T-cell (primary cell): ENCODE measurements at regions of chr17 and their contacts with region 1.

Region 1: DNA sequence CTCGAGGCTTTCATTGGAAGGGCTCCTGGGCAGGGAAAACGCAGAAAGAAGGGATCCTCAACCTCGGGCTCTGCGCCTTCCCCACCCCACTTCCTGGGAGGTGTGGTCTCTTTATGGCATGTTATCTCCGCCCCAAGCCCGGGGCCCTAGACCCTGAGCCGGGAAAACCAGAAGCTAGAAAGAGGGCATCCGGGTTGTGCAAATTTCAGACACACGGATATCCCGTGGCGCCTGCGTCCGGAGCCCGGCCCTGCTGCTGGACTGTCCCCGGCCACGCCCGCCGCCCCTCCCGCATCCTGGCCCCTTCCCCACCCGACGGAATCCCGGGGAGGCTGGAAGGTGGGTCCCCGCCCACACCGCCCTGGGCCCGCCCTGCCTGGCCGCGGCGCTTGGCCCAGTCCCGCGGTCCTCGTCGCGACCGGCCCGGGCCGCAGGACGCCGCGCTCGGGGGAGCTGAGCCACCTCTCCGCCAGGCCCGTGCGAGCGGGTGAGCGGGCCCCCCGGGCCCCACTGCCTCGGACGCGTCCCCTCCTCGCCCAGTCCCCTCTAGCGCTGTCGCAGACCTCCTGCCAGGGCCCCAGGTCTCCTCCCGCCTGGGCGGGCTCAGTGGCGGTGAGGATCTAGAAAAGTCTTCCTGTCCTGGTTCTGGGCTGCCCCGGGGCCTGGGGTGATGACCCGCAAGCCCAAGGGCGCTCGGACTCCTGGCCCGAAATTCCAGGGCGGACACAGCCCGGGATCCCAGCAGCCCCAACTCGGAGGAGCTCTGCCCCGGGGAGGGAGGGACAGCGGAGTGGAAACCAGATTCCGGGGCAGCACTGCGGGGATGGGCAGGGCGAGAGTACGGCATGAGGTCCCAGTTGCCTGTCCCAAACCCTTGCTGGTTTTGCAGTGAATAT is at the start of gene SLC16A5:
- DNase-seq: peak in 27 of 35 experiments; percentile 18 to 68 (median 35)
- ATAC-seq: peak; percentile 74 to 83 (median 80)
- H3K4me3 ChIP-seq: peak within 1 kb of the TSS; percentile 61 to 70
- H3K4me3 Mint-ChIP-seq: peak within 1 kb of the TSS; percentile 80 to 83 (median 81)
- H3K27ac ChIP-seq: peak within 1 kb of the TSS; percentile 52
- H3K27ac Mint-ChIP-seq: peak within 1 kb of the TSS; percentile 82 to 91
- H3K4me1 ChIP-seq: peaks cover 15 to 51% of the 10 kb centered on the region in 2 experiments
- H3K4me1 Mint-ChIP-seq: peaks cover 56 to 77% (median 59%) of the 10 kb centered on the region in 3 donors
- H3K27me3 ChIP-seq: no peaks in the 10 kb centered on the region
- H3K27me3 Mint-ChIP-seq: no peaks in the 10 kb centered on the region
- total RNA-seq, gene SLC16A5: 9.1 to 24.3 (median 16.8) TPM

Region 2: DNA sequence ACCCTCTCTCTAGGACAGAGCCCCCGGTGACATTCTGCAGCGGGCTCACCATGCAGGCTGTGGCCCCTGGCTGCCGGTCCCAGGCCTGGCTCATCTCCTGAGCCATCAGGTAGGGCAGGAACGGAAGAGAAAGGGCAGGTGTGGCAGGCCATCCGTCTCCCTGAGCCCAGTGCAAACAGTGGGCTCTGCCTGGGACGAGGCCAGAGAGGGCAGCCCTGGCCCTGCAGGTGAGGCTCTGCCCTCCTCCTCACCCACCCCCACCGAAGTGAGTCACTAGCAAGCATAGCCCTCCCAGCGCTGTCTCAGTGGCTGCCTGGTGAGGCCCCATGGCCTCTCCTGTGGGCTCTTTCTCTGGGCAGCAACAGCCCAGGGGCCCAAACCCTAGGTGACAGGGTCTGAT is 137.6 kb before region 1 on chr17:
- CTCF ChIA-PET with region 1: no interaction called
- POLR2A ChIA-PET with region 1: no interaction called
- DNase-seq: no peak
- ATAC-seq: no peak
- H3K4me3 ChIP-seq: no peak overlapping the region
- H3K4me3 Mint-ChIP-seq: no peak overlapping the region
- H3K27ac ChIP-seq: no peak overlapping the region
- H3K27ac Mint-ChIP-seq: no peak overlapping the region
- H3K4me1 ChIP-seq: no peaks in the 10 kb centered on the region
- H3K4me1 Mint-ChIP-seq: no peaks in the 10 kb centered on the region
- H3K27me3 ChIP-seq: peaks cover under 1 to 52% of the 10 kb centered on the region in 2 experiments
- H3K27me3 Mint-ChIP-seq: peaks cover 2 to 3% of the 10 kb centered on the region in 2 donors

Region 3: GRCh38 chr17:75059369-75060345 is 28.1 kb before region 1 on chr17:
- CTCF ChIA-PET with region 1: interaction called, 3 read pairs
- POLR2A ChIA-PET with region 1: interaction called, 7 to 10 read pairs
- DNase-seq: peak in 2 of 35 experiments; percentile 17 to 51
- ATAC-seq: peak; percentile 70 to 92 (median 74)
- H3K4me3 ChIP-seq: no peak overlapping the region
- H3K4me3 Mint-ChIP-seq: no peak overlapping the region
- H3K27ac ChIP-seq: no peak overlapping the region
- H3K27ac Mint-ChIP-seq: peak overlapping the region; percentile 46 to 61
- H3K4me1 ChIP-seq: no peaks in the 10 kb centered on the region
- H3K4me1 Mint-ChIP-seq: peaks cover 10 to 18% (median 12%) of the 10 kb centered on the region in 3 donors
- H3K27me3 ChIP-seq: no peaks in the 10 kb centered on the region
- H3K27me3 Mint-ChIP-seq: no peaks in the 10 kb centered on the region

Region 4: DNA sequence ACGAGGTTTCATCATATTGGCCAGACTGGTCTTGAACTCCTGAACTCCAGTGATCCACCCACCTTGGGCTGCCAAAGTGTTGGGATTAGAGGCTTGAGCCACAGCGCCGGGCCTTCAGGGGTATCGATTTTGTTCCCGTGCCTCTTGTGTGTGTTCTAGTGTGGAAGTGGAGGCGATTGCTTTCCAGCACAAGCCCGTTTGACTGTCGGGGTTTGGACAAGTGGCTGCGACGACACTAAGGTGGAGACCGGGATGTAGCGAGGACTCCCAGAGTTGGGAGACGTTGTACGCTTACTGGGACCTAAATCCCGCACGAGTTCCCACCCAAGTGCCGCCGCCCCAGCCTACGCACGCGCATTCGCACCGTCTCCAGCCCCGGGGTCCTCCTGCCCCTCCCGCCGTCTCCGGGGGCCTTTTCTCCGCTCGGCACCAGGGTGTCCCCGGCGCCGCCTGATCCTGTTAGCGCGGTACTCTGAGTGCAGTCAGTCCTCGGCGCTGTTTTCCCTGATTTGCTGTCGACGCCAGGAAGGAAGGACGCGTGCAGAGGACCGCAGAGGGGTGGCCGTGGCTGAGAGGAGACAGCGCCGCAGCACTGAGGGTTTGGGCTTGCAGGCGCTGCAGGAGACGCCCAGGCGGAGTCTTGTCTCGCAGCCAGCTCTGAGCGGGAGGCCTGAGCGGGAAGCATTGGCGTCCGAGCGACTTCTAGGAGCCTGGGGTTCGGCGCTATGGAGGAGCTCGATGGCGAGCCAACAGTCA is 117.4 kb after region 1 on chr17 and contains the start of gene NUP85:
- CTCF ChIA-PET with region 1: interaction called in 1 of 2 experiments, 15 read pairs
- POLR2A ChIA-PET with region 1: no interaction called
- DNase-seq: peak; percentile 78 to 95 (median 89)
- ATAC-seq: peak; percentile 85 to 95 (median 92)
- H3K4me3 ChIP-seq: peak within 1 kb of the TSS; percentile 95 to 99
- H3K4me3 Mint-ChIP-seq: peak within 1 kb of the TSS; percentile 93 to 95 (median 94)
- H3K27ac ChIP-seq: peak within 1 kb of the TSS; percentile 91
- H3K27ac Mint-ChIP-seq: peak within 1 kb of the TSS; percentile 99 to 100
- H3K4me1 ChIP-seq: peaks cover 8 to 25% of the 10 kb centered on the region in 2 experiments
- H3K4me1 Mint-ChIP-seq: peaks cover 23 to 37% (median 32%) of the 10 kb centered on the region in 3 donors
- H3K27me3 ChIP-seq: no peaks in the 10 kb centered on the region
- H3K27me3 Mint-ChIP-seq: no peaks in the 10 kb centered on the region
- total RNA-seq, gene NUP85: 56.2 to 128 (median 106) TPM